Endothelial cell of umbilical vein (primary cell): ENCODE measurements at regions of chr5 and their contacts with region 1.

Region 1: DNA sequence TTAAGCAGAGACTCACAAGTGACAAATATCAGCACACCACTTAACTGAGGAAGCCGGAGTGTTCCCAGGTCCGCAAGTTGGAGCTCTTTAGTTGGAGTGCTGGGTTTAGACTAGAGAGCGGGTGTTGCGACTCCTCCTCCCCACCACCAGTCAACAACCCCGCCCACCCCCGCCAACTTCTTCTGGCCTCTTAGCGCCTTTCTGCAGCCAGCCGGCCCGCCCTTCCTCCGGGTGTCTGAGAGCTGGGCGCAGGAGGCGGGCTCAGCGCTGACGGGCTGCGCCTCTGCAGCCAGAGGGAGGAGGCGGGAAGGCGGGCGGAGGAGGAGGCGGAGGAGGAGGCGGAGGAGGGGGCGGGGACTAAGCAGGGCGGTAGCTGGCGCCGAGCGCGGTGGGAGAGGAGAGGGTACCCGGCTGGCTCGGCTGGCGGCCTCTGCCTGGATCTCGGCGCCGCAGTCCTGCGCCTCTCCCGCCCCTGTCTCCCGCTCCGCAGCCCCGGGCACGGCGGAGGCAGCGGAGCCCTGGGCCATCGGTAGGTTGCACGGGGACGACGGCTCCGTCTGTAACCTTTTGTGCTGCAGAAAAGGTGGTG is at the start of gene MACIR:
- DNase-seq: peak; percentile 99
- H3K4me3 ChIP-seq: peak within 1 kb of the TSS; percentile 47 to 75 (median 69)
- H3K27ac ChIP-seq: peak within 1 kb of the TSS; percentile 76
- H3K4me1 ChIP-seq: peaks cover 8% of the 10 kb centered on the region
- H3K27me3 ChIP-seq: no peaks in the 10 kb centered on the region
- CTCF ChIP-seq: no peak
- POLR2A ChIP-seq: peak; percentile 69
- total RNA-seq, gene MACIR: 9.3 and 9.6 TPM in 2 replicates

Region 2: DNA sequence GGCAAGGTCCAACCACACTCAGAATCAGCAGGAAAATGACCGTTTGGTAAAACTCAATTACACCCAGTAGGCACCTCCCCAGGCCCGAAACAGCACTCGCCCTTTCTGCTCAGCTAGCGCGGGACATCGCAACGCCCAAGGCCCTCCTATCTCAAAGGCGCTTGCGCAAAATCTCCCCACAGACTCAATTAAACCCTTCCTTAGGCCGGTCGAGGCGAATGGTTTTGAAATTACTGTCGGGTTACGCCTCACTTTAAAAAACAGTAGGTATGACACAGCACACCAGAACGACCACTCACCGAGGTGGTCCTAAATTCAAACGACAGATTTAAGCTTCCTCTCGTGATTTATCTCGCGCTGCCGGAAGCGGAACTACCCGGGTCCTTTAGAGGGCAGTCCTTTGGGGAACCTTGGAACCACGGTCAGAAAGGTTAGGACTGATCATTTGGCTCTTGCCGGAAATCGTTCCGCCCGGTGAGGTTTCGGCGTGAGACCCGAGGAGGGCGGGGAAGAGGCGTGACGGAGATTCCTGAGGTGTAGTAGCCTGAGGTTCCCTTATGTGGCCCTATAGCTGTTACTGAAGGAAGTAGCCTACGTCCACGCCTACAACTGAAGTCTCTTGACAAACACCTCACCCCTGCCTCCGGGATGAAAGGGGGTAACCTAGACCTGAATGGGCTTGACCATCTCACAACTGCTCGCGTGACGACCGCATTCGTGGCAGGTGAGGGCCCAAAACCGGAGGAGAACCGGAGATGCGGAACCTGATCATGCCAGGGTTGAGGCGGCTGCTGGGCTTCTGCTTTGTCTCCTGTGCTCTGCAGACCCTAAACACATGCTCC is 138.5 kb before region 1 on chr5 and contains the starts of genes GIN1 and PPIP5K2:
- CTCF ChIA-PET with region 1: interaction called, 3 read pairs
- POLR2A ChIA-PET with region 1: interaction called, 4 read pairs
- dilution Hi-C with region 1: no loop called
- intact Hi-C with region 1: loop called (anchors 1 kb)
- DNase-seq: peak; percentile 99
- H3K4me3 ChIP-seq: peak within 1 kb of the TSS; percentile 63 to 92 (median 92)
- H3K27ac ChIP-seq: peak within 1 kb of the TSS; percentile 93
- H3K4me1 ChIP-seq: peaks cover 19% of the 10 kb centered on the region
- H3K27me3 ChIP-seq: no peaks in the 10 kb centered on the region
- CTCF ChIP-seq: no peak
- POLR2A ChIP-seq: peak; percentile 50
- total RNA-seq, gene GIN1: 4.4 and 6.7 TPM in 2 replicates
- total RNA-seq, gene PPIP5K2: 53.5 and 69.4 TPM in 2 replicates

Region 3: DNA sequence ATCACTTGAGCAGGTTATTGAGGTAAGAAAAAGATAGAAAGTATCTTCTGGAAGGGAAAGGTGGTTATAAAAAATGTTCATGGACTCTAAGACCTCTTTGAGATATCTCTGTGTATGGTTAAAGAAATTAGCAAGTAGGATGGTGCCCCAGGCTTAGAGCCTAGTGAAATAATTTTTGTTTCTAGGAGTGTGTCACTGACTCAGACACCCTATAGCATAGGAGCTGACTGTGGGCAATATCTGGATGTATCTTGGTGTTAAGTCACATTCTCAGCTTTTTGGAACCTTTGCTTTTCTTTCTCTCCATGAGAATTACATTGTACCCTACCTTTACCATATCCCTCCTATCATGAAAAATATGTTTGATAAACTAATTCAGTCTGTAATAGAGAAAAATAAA is 12.1 kb after region 1 on chr5:
- CTCF ChIA-PET with region 1: interaction called, 8 read pairs
- POLR2A ChIA-PET with region 1: interaction called, 7 read pairs
- dilution Hi-C with region 1: no loop called
- intact Hi-C with region 1: loop called (anchors 1 kb)
- DNase-seq: no peak
- H3K4me3 ChIP-seq: no peak overlapping the region
- H3K27ac ChIP-seq: no peak overlapping the region
- H3K4me1 ChIP-seq: peaks cover 20% of the 10 kb centered on the region
- H3K27me3 ChIP-seq: no peaks in the 10 kb centered on the region
- CTCF ChIP-seq: no peak
- POLR2A ChIP-seq: no peak

Region 4: DNA sequence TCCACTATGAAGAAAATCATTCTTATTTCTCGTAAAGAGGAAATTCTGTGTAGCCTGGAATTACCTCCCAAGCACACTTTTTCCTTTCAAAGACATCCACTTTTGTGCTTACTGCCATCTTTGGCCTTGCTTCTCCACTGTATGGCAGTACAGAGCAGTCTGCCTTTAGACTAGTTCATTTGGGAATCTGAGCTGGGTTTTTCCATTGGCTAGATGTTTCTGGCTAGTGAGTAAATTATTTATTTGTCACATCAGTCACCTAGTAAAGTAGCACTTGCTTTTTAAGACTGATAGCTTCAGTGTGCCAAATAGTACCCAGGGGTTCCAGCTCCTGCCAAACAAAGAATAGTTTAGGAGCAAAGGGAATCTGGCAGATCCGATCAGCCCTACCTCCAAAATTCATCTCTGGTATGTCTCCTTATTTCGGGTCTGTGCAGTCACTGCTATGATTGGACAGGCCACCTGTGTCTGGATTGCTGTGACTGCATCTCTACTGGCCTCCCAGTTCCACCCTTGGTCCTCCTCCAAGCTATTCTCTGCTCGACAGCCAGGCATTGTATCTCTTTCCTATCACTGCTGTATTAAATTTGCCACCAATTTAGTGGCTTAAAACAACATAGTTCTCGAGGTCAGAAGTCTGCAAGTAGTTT is 206.5 kb after region 1 on chr5:
- CTCF ChIA-PET with region 1: interaction called, 14 read pairs
- POLR2A ChIA-PET with region 1: no interaction called
- dilution Hi-C with region 1: no loop called
- intact Hi-C with region 1: loop called (anchors 2 kb)
- DNase-seq: no peak
- H3K4me3 ChIP-seq: no peak overlapping the region
- H3K27ac ChIP-seq: no peak overlapping the region
- H3K4me1 ChIP-seq: peaks cover 33% of the 10 kb centered on the region
- H3K27me3 ChIP-seq: no peaks in the 10 kb centered on the region
- CTCF ChIP-seq: no peak
- POLR2A ChIP-seq: no peak

Region 5: GRCh38 chr5:103562453-103563157 is 304.1 kb after region 1 on chr5 and contains the start of gene NUDT12:
- CTCF ChIA-PET with region 1: interaction called, 4 read pairs
- POLR2A ChIA-PET with region 1: no interaction called
- dilution Hi-C with region 1: no loop called
- intact Hi-C with region 1: loop called (anchors 5 kb)
- DNase-seq: peak; percentile 86
- H3K4me3 ChIP-seq: peak within 1 kb of the TSS; percentile 84 to 97 (median 87)
- H3K27ac ChIP-seq: peak within 1 kb of the TSS; percentile 75
- H3K4me1 ChIP-seq: peaks cover 8% of the 10 kb centered on the region
- H3K27me3 ChIP-seq: no peaks in the 10 kb centered on the region
- CTCF ChIP-seq: no peak
- POLR2A ChIP-seq: peak; percentile 46
- total RNA-seq, gene NUDT12: 3.6 and 4.9 TPM in 2 replicates